Ovary (tissue), 10 donors: ENCODE measurements at regions of chr19 and their contacts with region 1.

Region 1: DNA sequence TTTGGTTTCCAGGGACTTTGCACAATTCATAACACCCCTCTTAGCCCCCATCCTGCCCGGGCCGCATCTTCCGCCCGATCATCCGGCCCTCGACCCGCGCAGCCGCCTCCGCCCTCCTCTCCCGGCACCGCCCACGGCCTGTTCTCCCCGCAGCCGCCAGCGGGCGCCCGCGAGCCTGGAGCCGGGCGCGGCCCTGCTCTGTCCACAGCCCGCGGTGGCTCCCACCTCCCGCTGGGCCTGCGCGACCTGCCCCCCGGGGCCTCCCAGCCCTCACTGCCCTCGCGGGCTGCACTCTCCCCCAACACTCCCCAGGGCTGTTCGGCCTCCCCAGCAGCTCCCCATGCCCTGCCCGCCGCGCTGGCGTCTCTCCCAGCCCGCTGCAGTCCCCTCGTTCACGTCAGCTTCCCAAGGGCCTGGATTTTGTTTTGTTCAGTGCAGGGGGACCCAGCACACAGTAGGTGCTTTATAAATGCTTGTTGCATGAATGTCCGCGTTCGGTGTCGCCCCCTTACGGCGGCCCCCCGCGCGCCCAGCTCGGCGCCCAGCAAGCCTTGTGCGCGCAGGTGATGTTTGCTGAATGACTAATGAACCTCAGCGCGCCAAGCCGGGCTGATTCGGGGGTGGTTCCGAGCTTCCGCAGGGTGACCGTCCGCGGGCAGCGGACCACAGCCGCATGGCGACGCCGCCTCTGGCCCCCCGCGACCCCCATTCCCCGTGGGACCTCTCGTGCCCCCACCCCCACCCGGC is 4.6 kb upstream of the APC2 start:
- DNase-seq: peak; percentile 43 to 80 (median 62)
- H3K4me3 ChIP-seq: peak overlapping the region; percentile 10
- H3K27ac ChIP-seq: no peak overlapping the region
- H3K4me1 ChIP-seq: peaks cover 5% of the 10 kb centered on the region
- H3K27me3 ChIP-seq: peaks cover 3% of the 10 kb centered on the region
- CTCF ChIP-seq: peak; percentile 83 to 91 (median 85)
- EP300 ChIP-seq: no peak
- POLR2A ChIP-seq: no peak

Region 2: GRCh38 chr19:1315470-1316231 is 129.7 kb before region 1 on chr19:
- intact Hi-C with region 1: loop called in 1 of 4 experiments (anchors 10 kb)
- DNase-seq: peak; percentile 46 to 78 (median 71)
- H3K4me3 ChIP-seq: no peak overlapping the region
- H3K27ac ChIP-seq: no peak overlapping the region
- H3K4me1 ChIP-seq: peaks cover 4% of the 10 kb centered on the region
- H3K27me3 ChIP-seq: no peaks in the 10 kb centered on the region
- CTCF ChIP-seq: peak; percentile 40 to 75 (median 66)
- EP300 ChIP-seq: no peak
- POLR2A ChIP-seq: no peak